ENCODE measurements at regions of chr19 and their contacts with region 1.

Region 1: DNA sequence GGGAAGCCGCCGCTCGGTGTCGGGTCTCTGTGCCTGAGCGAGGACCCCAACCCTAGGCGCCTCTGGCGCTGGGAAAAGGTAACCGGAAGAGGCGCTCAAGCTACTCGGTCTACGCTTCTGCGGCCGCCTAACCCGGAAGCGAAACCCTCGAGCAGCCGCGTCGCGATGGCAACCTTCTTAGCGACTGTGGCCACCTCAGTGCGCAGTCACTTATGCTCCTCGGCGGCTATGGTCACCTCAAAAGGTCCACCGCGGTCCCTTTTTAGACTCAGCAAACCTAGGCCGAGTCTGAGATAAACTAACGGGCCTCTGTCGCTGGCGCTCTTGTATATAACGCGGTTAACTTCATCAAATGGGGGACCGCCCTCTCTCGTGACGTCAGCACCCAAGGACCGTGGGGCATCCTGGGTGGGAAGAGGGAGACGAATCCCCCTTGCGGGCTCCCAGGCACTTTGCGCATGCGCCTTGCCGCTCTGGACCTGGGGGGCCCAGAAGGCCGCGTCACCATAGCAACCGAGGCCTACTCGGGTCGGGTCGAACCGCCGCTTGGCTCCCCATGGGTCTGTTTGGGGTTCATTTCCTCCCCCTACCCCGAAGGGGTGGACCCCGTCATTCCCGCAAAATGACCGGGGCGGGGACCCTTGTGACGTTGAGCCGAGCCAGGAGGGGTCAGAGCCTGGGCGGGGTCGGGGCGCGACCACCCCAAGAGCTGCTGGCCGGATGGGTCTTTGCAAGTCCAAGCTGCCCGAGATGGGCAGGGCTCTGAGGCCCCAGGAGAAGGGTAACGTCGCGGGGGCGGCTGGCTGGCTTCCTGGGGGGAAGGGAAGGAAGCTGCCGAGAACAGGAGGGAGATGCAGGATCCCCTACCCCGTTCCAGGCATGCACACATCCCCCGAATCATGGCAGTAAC is at the start of gene GTF2F1:
- DNase-seq: peak; percentile 89 to 99 (median 97)
- ATAC-seq: peak; percentile 79 to 82
- H3K4me3 Mint-ChIP-seq: peak within 1 kb of the TSS; percentile 85 to 96 (median 94)
- H3K27ac Mint-ChIP-seq: peak within 1 kb of the TSS; percentile 89 to 99 (median 99)
- H3K4me1 Mint-ChIP-seq: peaks cover 19 to 36% (median 28%) of the 10 kb centered on the region in 4 donors
- H3K27me3 Mint-ChIP-seq: no peaks in the 10 kb centered on the region
- polyA plus RNA-seq, gene GTF2F1: 16.3 to 30.1 (median 20.6) TPM

Region 2: DNA sequence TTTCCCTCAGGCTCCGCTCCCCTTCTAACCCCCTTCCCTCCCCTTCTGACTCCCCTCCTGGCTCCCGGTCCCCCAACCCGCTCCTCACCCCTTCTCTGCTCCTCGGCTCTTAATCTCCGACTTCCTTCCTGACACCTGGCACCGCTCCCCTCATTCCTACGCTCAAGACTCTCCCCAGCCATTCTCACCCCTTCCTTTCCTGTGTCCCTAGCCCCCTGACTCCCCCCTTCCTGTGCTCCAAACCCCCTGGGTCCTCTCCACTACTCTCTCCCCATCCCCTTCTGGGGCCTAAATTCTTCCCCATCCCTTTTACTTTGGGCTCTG is 31.3 kb before region 1 on chr19:
- POLR2A ChIA-PET with region 1: interaction called, 21 read pairs
- DNase-seq: no peak
- ATAC-seq: peak in 1 of 2 donors; percentile 11
- H3K4me3 Mint-ChIP-seq: peak overlapping the region; percentile 91 to 100 (median 97)
- H3K27ac Mint-ChIP-seq: peak overlapping the region; percentile 86 to 98 (median 97)
- H3K4me1 Mint-ChIP-seq: peaks cover 16 to 40% (median 22%) of the 10 kb centered on the region in 4 donors
- H3K27me3 Mint-ChIP-seq: no peaks in the 10 kb centered on the region

Measured in naive thymus-derived CD8-positive, alpha-beta T cell (primary cell).